Dendritic cell treated with granulocyte-macrophage colony-stimulating factor and Interleukin-4, amounts not matched to agents 40 ng/mL and 50 ng/mL, for 4 days (primary cell): ENCODE measurements at regions of chr2 and their contacts with region 1.

Region 1: GRCh38 chr2:172102391-172103278 is at the start of gene DLX2:
- H3K4me3 Mint-ChIP-seq: peak within 1 kb of the TSS; percentile 89
- H3K27ac Mint-ChIP-seq: peak within 1 kb of the TSS; percentile 57
- H3K4me1 Mint-ChIP-seq: peaks cover 70% of the 10 kb centered on the region
- H3K27me3 Mint-ChIP-seq: peaks cover 89% of the 10 kb centered on the region

Region 2: DNA sequence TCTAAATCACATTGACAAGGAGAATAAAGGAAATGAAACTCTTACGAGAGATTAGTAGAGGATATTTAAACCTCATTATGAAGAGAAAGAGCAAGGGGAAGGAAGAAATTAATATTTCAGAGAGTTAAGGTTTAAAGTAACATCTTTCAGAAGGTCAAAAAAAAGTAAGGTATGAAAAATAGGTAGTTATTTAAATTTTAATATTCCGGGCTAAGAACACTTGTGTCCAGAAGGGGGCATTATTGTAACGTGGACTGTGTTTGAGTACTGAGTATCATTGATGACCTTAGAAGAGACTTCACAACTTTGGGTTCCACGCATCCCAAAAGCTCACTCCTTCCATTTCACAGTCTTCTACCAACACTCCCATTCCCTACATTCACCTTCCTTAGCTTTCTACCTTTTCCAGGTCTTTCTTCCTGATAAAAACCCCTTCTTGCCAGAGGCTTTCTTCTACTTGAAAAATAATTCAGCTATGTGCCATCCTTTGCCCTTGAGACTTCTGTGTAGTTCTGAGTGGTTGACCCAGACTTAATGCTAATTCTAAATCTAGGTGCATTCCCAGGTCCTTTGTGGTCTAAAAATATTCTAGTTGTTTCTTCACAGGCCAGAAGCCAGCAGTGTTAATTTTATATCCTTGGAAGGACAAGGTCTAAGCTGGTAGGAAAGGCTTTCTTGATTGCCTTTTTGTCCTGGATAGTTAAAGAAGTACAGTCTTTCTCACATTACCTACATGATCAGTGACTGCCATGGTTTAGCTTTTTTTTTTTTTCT is 398.9 kb before region 1 on chr2:
- intact Hi-C with region 1: loop called (anchors 2 kb)
- H3K4me3 Mint-ChIP-seq: no peak overlapping the region
- H3K27ac Mint-ChIP-seq: no peak overlapping the region
- H3K4me1 Mint-ChIP-seq: peaks cover 9% of the 10 kb centered on the region
- H3K27me3 Mint-ChIP-seq: no peaks in the 10 kb centered on the region

Region 3: DNA sequence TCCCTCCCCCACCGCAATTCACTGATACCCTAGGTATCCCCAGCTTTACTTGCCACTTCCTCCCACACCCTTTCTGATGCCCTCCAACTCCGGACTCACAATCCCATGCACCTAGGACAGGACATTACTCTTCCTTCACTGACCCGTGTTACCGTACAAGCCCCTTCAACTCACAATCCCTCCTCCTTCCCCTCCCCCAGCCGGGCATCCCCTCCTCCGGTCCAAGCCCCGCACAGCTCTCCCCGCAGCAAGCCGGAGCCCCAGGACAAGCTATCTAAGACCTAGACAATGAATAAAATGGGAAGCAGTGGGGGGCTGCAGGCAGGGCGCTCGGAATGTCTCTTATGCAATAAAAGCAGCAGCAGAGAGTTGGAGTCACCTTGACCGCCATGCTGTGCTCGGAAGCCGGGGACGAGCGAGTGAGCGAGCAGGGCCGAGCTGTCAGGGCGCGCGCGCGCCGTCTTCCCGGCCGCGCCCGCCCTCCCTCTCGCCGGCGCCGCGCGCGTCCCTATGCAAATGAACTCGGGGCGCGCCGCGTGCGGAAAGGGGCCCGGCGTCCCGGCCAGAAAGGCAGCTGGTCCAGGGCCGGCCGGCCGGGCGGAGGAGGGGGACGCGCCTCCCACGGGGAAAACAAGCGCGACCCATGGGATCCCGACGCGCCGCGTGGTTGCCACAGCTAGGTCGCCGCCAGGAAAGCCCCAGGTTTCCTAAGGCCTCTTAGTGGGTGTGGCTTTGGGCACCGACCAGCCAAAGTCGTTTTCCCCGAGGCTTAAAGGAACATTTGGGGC is 208.6 kb before region 1 on chr2 and contains the start of gene SLC25A12:
- intact Hi-C with region 1: loop called (anchors 5 kb)
- H3K4me3 Mint-ChIP-seq: peak within 1 kb of the TSS; percentile 89
- H3K27ac Mint-ChIP-seq: peak within 1 kb of the TSS; percentile 91
- H3K4me1 Mint-ChIP-seq: peaks cover 18% of the 10 kb centered on the region
- H3K27me3 Mint-ChIP-seq: no peaks in the 10 kb centered on the region

Region 4: GRCh38 chr2:171957061-171957460 is 145.6 kb before region 1 on chr2:
- intact Hi-C with region 1: loop called (anchors 2 kb)
- H3K4me3 Mint-ChIP-seq: no peak overlapping the region
- H3K27ac Mint-ChIP-seq: peak overlapping the region; percentile 89
- H3K4me1 Mint-ChIP-seq: peaks cover 54% of the 10 kb centered on the region
- H3K27me3 Mint-ChIP-seq: no peaks in the 10 kb centered on the region

Region 5: GRCh38 chr2:172084734-172085459 is 17.7 kb before region 1 on chr2:
- intact Hi-C with region 1: loop called (anchors 2 kb)
- H3K4me3 Mint-ChIP-seq: peak overlapping the region; percentile 77
- H3K27ac Mint-ChIP-seq: peak overlapping the region; percentile 68
- H3K4me1 Mint-ChIP-seq: peaks cover 77% of the 10 kb centered on the region
- H3K27me3 Mint-ChIP-seq: peaks cover 97% of the 10 kb centered on the region